ENCODE measurements at regions of chr4 and their contacts with region 1.

Region 1: GRCh38 chr4:143358923-143359643 is 22.4 kb downstream of the GAB1 start:
- DNase-seq: peak; percentile 91
- H3K4me3 ChIP-seq: peak overlapping the region; percentile 61
- H3K27ac ChIP-seq: peak overlapping the region; percentile 98
- H3K4me1 ChIP-seq: peaks cover 96% of the 10 kb centered on the region
- CTCF ChIP-seq: no peak

Region 2: DNA sequence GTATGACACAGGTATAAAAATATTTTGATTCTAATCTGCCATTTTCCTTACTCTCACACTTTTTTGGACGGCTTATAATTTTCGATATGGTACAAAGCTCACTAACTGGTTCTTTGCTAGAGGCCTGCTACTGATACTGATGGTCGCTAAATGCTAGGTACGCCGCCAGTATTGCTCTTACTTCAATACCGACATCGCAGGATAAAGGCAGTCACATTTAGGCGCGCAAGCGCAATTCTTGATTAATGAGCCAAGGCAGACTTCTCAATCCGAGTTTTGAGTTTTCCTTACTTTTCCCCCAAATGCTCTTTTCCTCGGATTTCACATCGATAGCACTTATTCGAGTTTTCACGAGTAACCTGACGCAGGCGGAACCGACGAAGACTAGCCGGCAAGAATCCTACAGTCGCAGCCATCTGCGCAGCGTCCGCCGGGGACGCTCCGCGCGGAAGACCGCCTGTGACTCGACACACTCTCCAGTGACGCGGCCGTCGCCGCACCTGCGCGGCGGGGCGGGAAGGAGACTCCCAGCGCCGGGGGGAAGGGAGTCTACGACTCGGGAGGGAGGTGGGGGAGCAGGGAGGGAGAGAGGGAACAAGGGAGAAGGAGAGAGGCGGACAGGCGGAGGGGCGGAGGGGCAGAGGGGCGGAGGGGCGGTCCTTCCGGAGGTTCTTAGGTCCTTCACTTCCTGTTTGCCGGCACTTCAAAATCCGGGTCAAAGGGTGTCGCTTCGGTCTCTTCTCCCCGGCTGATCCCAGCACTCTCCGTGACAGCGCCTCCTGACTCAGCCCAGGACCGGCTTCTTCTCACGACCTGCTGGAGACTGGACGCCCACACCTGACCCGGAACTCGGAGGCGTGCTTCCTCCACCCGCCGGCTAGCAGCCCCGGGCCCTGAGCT is 174.6 kb before region 1 on chr4 and contains the start of gene USP38:
- CTCF ChIA-PET with region 1: no interaction called
- POLR2A ChIA-PET with region 1: no interaction called
- intact Hi-C with region 1: loop called (anchors 5 kb)
- DNase-seq: peak; percentile 90
- H3K4me3 ChIP-seq: peak within 1 kb of the TSS; percentile 94
- H3K27ac ChIP-seq: peak within 1 kb of the TSS; percentile 75
- H3K4me1 ChIP-seq: peaks cover 29% of the 10 kb centered on the region
- CTCF ChIP-seq: 0 out of 2 replicates have a peak, but pooled peaks have one; percentile 46
- total RNA-seq, gene USP38: 21.8 and 23.6 TPM in 2 replicates

Region 3: DNA sequence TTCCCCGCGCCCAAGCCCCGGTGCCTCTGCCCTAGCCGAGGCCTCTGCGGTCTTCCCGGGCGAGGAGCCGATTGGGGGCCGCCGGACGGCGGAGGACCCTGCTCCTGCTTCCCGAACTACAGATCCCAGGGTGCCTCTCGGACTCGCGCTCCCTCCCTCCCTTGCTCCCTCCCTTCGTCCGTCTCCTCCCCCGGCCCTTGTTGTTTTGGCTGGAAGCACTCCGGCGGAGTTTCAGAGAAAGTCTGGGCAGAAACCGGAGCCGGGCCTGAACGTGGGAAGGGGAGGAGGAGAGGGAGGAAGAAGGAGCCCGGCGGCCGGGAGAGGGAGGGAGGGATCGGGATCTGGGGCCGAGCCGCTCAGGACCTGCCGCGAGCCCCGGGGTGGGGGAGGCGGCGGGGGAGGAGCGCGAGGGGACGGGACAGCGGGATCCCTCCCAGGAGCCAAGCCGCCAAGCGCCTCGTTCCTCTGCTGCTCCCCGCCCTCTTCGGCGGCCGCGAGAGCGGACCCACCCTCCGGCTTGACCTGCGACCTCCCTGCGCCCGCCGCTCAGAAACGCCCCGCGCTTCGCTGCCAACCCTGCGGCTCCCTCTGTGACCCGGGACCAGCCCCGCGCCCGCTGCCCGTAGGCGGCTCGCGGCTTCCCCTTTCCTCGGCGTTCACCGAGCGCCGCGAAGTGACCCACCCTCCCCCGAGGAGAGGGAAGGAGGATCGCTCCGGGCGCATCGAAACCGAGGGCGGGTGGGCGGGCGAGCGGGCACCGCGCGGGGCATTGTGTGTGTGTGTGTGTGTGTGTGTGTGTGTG is 22.9 kb before region 1 on chr4:
- CTCF ChIA-PET with region 1: interaction called, 13 read pairs
- POLR2A ChIA-PET with region 1: interaction called, 236 read pairs
- intact Hi-C with region 1: loop called (anchors 1 kb)
- DNase-seq: peak; percentile 74
- H3K4me3 ChIP-seq: peak overlapping the region; percentile 94
- H3K27ac ChIP-seq: peak overlapping the region; percentile 59
- H3K4me1 ChIP-seq: peaks cover 43% of the 10 kb centered on the region
- CTCF ChIP-seq: no peak

Region 4: GRCh38 chr4:143389579-143390195 is 30.6 kb after region 1 on chr4:
- CTCF ChIA-PET with region 1: interaction called, 6 read pairs
- POLR2A ChIA-PET with region 1: interaction called, 186 read pairs
- intact Hi-C with region 1: loop called (anchors 2 kb)
- DNase-seq: no peak
- H3K4me3 ChIP-seq: peak overlapping the region; percentile 5
- H3K27ac ChIP-seq: peak overlapping the region; percentile 96
- H3K4me1 ChIP-seq: peaks cover 80% of the 10 kb centered on the region
- CTCF ChIP-seq: no peak

Region 5: DNA sequence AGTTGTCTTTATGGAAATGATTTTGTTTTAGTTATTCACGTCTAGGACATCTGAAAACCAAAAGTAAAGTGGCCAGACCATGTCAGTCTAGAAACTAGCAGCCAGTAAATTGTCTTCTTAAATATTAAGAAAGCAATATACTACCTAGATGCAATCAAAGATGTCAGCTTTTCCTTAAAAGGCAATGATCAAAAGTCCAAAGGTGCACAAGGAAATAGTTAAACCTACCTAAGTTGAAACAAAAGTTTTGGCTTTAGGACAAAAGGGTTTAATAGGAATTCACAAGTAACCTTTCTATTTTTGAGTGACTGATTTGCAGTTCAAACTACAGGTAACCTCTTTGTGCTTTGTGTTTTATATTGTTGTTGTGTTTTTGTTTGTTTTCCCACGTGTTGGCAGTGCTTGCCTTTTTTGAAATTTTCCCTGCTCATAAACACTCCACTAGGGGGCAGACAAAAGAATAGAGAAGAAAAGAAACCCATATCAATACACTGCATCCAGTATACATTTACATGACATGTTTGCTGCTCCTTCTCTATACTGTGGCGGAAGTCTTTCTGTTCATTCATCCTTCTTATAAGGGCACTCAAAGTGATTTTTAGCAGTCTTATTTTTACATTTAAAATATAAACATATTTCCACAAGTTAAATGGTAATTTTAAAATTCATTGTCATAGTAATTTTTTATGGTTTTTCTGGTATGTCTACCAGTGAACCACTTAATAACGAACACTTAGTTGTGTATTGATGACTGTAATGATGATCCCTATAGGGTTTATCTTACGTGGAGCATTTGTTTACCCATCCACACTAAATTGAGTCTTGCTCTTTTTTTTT is 40.2 kb after region 1 on chr4:
- CTCF ChIA-PET with region 1: no interaction called
- POLR2A ChIA-PET with region 1: interaction called, 130 read pairs
- intact Hi-C with region 1: loop called (anchors 1 kb)
- DNase-seq: peak; percentile 72
- H3K4me3 ChIP-seq: peak overlapping the region; percentile 12
- H3K27ac ChIP-seq: peak overlapping the region; percentile 97
- H3K4me1 ChIP-seq: peaks cover 99% of the 10 kb centered on the region
- CTCF ChIP-seq: peak; percentile 97

Region 6: DNA sequence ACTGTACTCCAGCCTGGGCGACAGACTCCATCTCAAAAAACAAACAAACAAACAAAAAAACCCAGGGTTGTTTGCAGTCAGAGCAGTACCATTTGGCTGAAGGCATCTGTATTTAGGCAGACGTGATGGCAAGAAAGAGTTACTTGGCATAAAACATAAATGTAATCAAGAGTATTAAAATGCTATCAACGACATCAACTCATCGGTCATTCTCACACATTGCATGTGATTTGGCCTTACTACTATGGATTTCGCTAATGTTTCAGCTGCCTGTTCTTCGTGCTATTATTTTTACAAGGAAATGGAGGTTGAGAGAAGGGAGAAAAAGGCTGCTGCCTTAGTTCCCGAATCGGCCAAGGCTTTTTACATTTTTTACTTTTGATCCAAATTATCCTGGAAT is 138.9 kb after region 1 on chr4:
- CTCF ChIA-PET with region 1: no interaction called
- POLR2A ChIA-PET with region 1: no interaction called
- intact Hi-C with region 1: no loop called
- DNase-seq: no peak
- H3K4me3 ChIP-seq: no peak overlapping the region
- H3K27ac ChIP-seq: no peak overlapping the region
- H3K4me1 ChIP-seq: no peaks in the 10 kb centered on the region
- CTCF ChIP-seq: no peak

Measured in OCI-LY7 (cell line).